PC-9 (cell line): ENCODE measurements at regions of chr22 and their contacts with region 1.

Region 1: DNA sequence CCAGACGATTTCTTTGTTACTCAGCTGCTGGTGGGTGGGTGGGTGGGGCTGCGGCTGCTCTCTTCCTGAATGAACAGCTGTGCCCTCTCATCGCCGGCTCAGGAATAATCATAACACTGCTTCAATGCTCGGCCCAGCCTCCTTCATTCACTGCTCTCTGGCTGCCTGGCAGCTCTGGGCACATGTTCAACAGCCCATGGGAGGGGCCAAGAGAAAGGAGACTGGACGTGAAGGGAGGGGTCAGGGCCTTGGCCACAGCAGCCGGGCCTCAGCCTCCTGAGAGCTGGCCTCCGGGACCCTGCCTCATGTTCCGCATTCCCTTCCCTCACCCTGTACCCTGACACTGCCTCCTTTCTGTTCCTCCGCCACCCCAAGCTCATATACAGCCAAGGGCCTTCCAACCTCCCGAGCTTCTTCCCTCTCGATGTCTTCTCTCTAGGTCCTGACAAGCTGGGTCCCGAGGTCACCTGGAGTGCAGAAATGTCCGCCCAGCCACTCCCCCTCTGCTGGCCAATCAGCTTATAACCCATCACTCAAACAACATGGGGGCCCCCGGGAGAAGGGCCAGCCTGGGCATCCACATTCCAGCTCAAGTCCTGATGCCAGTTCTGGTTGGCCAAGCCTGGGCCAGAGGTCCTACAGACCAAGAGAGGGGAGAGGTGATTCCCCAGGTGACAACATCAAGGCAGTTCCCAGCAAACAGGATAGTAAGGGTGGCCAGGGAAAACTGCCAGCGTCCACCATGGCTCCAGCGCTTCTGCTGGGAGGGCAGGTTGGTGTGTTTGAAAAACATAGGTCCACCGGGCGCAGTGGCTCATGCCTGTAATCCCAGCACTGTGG is 3.2 kb upstream of the CSDC2 start:
- DNase-seq: no peak
- H3K4me3 ChIP-seq: no peak overlapping the region
- H3K27ac ChIP-seq: no peak overlapping the region
- H3K4me1 ChIP-seq: peaks cover 3% of the 10 kb centered on the region
- H3K27me3 ChIP-seq: no peaks in the 10 kb centered on the region
- CTCF ChIP-seq: no peak

Region 2: DNA sequence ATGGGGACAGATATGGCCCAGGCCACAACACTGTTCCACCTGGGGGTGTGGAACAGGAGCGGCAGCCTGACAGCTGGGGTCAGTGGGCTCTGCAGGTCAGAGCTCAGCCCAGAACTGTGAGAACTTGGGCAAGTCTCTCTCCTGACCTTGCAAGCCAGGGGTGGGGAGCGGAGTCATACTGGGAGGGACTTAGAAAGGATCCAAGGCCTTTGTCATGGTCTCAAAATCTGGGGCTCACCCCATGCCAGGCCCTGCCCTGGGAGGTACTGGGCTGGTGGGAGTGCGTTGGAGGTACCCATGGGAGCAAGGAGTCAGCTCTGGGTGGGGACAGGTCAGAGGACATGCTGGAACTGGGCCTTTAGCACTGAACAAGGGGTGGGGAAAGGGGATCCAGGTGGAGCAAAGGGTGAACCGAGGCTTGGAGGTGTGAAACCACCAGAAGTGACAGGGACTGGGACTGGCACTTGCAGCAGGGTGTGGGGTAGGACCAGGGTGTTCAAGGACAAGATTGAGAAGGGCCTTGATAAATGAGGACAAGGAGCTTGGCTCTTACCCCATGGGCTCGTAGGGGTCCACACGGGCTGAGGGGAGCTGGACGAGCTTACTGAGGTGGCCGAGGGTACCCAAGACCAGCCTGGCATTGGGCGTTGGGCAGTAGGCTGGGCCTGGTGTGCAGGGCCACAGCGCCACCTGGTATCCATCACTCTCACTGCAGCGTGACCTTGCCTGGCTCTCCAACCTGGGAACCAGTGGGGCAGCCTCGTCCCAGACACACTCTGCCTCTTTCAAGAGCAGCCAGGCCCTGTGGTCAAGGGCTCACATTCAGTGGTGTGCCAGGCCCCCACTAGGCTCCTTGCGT is 39.4 kb after region 1 on chr22:
- CTCF ChIA-PET with region 1: interaction called, 11 read pairs
- POLR2A ChIA-PET with region 1: no interaction called
- intact Hi-C with region 1: loop called (anchors 1 kb)
- DNase-seq: peak in 1 of 2 experiments; percentile 76
- H3K4me3 ChIP-seq: no peak overlapping the region
- H3K27ac ChIP-seq: no peak overlapping the region
- H3K4me1 ChIP-seq: no peaks in the 10 kb centered on the region
- H3K27me3 ChIP-seq: no peaks in the 10 kb centered on the region
- CTCF ChIP-seq: peak; percentile 91